ENCODE measurements at regions of chr5 and their contacts with region 1.

Region 1: DNA sequence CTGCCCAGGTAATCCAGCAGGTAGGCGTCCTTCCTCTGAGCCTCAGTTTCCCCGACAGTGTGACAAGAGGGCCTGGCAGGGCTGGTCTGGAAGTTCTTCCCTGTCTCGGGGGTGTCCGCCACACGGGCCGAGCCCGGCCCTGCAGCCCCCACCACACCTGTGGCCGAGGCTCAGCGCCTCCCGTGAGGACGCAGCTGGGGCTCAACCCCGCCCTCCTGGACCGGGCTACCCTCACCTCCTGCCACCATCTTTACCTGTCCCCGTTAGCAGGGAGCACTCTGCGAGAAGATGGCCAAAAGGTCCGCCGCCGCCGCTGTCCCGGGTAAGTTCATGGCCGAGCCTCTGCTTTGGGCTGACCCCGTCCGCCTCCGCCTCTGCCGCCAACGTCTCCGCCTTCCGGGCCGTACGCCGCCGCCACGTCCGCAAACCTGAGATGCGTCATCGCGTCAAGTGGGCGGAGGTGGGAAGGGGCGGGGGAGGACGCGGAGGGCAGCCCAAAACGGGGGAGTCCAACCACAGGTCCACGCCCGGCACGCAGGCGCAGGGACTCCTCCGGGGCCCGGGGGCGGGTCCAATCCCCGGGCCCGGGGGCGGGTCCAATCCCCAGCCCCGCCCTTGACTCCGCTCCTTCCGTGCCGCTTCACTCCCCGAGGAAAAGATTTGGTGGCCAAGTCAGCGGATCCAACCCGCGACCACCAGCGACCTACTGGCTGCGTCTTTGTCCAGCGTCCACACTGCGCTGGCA is at the start of gene LYSMD3:
- DNase-seq: peak; percentile 90 to 99 (median 94)
- H3K4me3 ChIP-seq: peak within 1 kb of the TSS; percentile 63 to 99 (median 90)
- H3K27ac ChIP-seq: peak within 1 kb of the TSS; percentile 74 to 100 (median 97)
- H3K27me3 ChIP-seq: no peaks in the 10 kb centered on the region
- CTCF ChIP-seq: peak in 1 of 56 donors; percentile 7
- total RNA-seq, gene LYSMD3: 8.2 to 18.0 (median 13.0) TPM

Region 2: GRCh38 chr5:89900346-89900745 is 629.0 kb before region 1 on chr5:
- intact Hi-C with region 1: no loop called
- DNase-seq: no peak
- H3K4me3 ChIP-seq: no peak overlapping the region
- H3K27ac ChIP-seq: peak overlapping the region in 35 of 59 donors; percentile 26 to 87 (median 67)
- H3K27me3 ChIP-seq: no peaks in the 10 kb centered on the region
- CTCF ChIP-seq: no peak

Region 3: DNA sequence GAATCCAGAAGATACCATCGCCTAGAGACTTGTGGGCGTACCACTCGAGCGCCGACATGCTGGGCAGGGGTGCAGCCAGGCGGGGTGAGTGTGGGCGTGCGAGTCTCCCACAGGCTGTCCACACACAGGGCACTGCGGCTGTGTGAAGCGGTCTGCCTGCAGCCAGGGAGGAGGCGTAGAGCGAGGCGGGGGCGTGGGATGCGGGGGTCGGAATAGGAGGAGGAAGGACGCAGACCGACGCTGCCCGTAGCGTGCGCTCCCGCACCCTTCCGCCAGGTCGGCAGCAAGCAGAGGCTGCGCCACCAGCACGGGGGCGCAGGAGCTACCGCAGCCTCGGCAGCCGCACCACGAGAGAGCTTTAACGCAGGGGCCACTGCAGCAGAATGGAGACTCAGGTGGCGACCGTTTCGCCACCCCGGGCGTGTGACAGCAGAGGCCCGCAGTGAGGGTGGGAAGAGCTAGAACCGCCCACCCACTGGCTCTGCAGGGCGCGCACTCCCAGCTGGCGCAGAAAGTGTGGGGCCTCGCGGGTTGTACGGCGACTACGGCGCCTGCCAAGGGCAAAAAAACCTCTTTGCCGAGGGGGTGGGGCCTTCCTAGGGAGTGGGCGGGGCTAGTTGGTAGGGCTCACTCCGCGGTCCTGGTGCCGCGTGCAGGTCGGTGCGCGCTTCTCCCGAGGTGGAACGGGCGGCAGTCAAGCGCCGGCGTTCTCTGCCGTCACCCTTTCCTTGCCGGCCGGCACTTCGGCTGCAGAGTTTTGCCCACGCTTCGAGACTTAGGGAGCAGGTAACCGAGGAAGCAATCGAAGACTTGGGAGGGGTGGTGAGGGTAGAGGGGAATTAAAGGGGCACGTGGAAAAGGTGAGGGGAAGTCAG is 54.9 kb before region 1 on chr5 and contains the starts of genes MBLAC2 and POLR3G:
- intact Hi-C with region 1: loop called (anchors 1 kb)
- DNase-seq: peak; percentile 80 to 94 (median 90)
- H3K4me3 ChIP-seq: peak within 1 kb of the TSS; percentile 52 to 98 (median 89)
- H3K27ac ChIP-seq: peak within 1 kb of the TSS; percentile 32 to 96 (median 90)
- H3K27me3 ChIP-seq: no peaks in the 10 kb centered on the region
- CTCF ChIP-seq: peak in 54 of 56 donors; percentile 10 to 72 (median 52)
- total RNA-seq, gene MBLAC2: 9.0 to 18.7 (median 13.8) TPM
- total RNA-seq, gene POLR3G: 3.8 to 12.6 (median 7.0) TPM

Region 4: GRCh38 chr5:90548069-90548593 is 18.8 kb after region 1 on chr5:
- intact Hi-C with region 1: no loop called
- DNase-seq: peak in 1 of 10 donors; percentile 17
- H3K4me3 ChIP-seq: peak overlapping the region in 16 of 59 donors; percentile 0 to 36 (median 18)
- H3K27ac ChIP-seq: no peak overlapping the region
- H3K27me3 ChIP-seq: no peaks in the 10 kb centered on the region
- CTCF ChIP-seq: no peak

Measured in dorsolateral prefrontal cortex (tissue), 120 donors.